ENCODE measurements at regions of chr22 and their contacts with region 1.

Region 1: DNA sequence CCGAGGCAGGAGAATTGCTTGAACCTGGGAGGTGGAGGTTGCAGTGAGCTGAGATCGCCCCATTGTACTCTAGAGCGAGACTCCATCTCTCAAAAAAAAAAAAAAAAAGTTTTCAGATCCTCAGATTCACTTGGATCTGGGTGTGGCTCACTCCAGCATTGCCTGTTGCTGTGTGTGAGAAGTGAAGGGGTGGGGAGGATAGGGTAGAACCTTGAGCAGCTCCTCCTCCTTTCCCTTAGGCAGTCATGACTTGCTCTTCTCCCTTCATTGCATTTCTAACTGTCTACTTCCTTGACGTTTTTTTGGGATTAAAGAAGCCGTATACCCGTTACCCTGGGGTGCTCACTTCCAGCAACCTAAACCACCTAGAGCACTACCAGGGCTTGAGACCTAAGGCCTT is 63.1 kb upstream of the YWHAH start:
- DNase-seq: no peak
- ATAC-seq: no peak
- H3K4me3 ChIP-seq: no peak overlapping the region
- H3K27ac ChIP-seq: no peak overlapping the region
- H3K4me1 ChIP-seq: no peaks in the 10 kb centered on the region
- H3K27me3 ChIP-seq: no peaks in the 10 kb centered on the region
- CTCF ChIP-seq: no peak

Region 2: DNA sequence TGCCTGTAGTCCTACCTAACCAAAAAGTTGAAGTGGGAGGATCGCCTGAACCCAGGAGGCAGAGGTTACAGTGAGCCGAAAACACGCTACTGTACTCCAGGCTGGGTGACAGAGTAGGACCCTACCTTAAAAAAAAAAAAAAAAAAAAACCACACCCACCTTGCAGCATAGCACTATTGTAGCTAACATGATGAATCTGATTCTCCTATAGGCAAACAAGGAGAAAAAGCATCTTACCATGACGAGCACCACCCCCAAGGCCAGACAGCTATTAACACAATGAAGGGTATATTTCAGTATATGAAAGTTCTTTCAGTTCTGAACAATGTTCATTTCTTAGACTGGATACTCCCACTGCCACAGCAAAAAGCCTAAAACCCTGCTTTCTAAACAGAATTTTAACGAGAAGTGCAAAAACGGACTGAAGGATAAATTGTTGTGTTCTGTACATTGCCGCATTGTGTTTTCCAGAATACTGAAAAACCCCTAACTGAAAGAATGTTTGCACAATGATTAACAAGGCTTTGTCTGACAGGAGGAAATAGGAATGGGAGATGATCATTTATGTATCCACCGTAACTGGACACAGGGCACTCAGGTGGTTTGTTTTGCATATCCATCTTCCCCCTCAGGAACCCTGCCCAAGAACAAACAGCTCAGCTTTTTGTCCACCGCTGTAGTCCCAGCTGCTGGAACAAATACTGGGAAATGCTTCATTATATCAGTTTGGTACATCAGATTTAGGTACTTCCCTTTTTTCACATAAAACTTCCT is 228.1 kb before region 1 on chr22:
- CTCF ChIA-PET with region 1: no interaction called
- POLR2A ChIA-PET with region 1: no interaction called
- in situ Hi-C with region 1: no loop called
- intact Hi-C with region 1: no loop called
- DNase-seq: no peak
- ATAC-seq: peak; percentile 60
- H3K4me3 ChIP-seq: no peak overlapping the region
- H3K27ac ChIP-seq: peak overlapping the region; percentile 48
- H3K4me1 ChIP-seq: peaks cover 10% of the 10 kb centered on the region
- H3K27me3 ChIP-seq: no peaks in the 10 kb centered on the region
- CTCF ChIP-seq: no peak

Region 3: GRCh38 chr22:31917227-31917921 is 36.2 kb after region 1 on chr22:
- CTCF ChIA-PET with region 1: interaction called, 5 read pairs
- POLR2A ChIA-PET with region 1: interaction called, 15 read pairs
- in situ Hi-C with region 1: no loop called
- intact Hi-C with region 1: no loop called
- DNase-seq: no peak
- ATAC-seq: peak; percentile 39; the same call in 1 of the 2 replicates
- H3K4me3 ChIP-seq: no peak overlapping the region
- H3K27ac ChIP-seq: no peak overlapping the region
- H3K4me1 ChIP-seq: no peaks in the 10 kb centered on the region
- H3K27me3 ChIP-seq: no peaks in the 10 kb centered on the region
- CTCF ChIP-seq: no peak

Measured in Panc1 (cell line).